MCF 10A (cell line): ENCODE measurements at regions of chr19 and their contacts with region 1.

Region 1: GRCh38 chr19:2032296-2032941 is 16.9 kb upstream of the BTBD2 start:
- DNase-seq: peak; percentile 98
- H3K4me3 Mint-ChIP-seq: peak overlapping the region; percentile 57
- H3K27ac Mint-ChIP-seq: peak overlapping the region; percentile 94
- H3K4me1 Mint-ChIP-seq: peaks cover 29% of the 10 kb centered on the region
- H3K27me3 Mint-ChIP-seq: no peaks in the 10 kb centered on the region
- CTCF ChIP-seq: no peak

Region 2: DNA sequence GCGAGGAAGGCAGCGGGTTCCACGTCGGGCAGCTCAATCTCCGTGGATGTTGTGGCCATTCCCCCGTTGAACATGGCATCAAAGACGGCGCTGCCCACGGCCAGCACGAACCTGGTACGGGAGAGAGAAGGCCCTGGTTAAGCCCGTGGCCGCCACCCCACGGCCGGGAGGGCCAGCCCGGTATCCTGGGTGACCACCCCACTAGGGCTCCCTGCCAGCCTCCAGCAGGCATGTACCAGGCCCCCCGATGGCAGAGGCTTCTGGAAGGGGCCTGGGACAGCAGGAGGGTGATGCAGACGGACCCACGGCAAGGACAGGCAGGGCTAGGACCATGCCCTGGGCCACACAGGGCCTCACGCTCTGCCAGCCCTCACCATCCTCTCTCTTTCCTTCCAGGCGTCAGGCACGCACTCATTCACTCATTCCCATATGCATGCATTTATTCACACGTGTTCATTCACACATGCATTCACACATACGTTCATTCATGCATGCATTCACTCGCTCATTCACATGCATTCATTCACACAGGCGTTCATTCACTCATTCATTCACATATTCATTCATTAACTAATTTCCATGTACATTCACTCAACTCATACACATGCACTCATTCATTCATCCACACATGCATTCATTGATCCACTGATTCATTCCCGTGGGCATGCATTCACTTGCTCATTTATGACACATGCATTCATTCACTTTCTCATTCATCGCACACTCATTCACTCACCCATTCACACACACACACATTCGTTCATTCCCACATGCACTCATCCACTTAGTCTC is 34.9 kb before region 1 on chr19:
- CTCF ChIA-PET with region 1: no interaction called
- POLR2A ChIA-PET with region 1: no interaction called
- intact Hi-C with region 1: no loop called
- DNase-seq: no peak
- H3K4me3 Mint-ChIP-seq: no peak overlapping the region
- H3K27ac Mint-ChIP-seq: no peak overlapping the region
- H3K4me1 Mint-ChIP-seq: peaks cover 6% of the 10 kb centered on the region
- H3K27me3 Mint-ChIP-seq: no peaks in the 10 kb centered on the region
- CTCF ChIP-seq: no peak

Region 3: DNA sequence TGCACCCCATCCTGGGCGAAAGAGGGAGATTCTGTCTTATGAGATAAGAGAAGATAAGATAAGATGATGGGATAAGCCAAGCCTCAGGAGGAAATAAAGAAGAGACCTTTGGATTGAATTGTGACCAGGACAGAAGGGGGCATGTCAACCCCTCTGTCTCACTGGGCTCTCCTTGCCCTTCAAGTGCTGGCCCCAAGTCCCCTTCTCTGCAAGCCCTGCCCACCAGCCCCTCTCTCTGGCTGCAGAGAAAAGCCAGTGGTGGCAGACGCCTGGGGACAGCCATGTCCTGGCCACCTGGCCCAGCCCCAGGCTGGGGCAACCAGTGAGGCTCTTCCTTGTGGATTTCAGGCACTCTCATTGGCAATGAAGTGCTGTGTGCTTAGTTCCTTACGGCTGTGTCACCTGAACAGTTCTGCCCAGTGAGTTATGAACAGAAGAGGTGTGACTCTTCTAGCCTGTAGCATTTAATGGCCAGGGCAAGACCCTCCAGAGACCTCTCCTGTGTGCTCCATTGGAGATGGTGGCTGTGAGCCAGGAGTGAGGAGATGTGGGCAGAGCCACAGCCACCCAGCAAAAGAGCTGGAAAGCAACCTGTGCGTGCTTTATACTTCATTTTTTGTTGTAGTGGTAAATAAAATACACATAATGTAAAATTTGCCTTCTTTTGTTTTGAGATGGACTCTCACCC is 10.8 kb before region 1 on chr19:
- CTCF ChIA-PET with region 1: interaction called, 8 read pairs
- POLR2A ChIA-PET with region 1: interaction called, 15 read pairs
- intact Hi-C with region 1: no loop called
- DNase-seq: no peak
- H3K4me3 Mint-ChIP-seq: no peak overlapping the region
- H3K27ac Mint-ChIP-seq: no peak overlapping the region
- H3K4me1 Mint-ChIP-seq: peaks cover 6% of the 10 kb centered on the region
- H3K27me3 Mint-ChIP-seq: no peaks in the 10 kb centered on the region
- CTCF ChIP-seq: no peak

Region 4: DNA sequence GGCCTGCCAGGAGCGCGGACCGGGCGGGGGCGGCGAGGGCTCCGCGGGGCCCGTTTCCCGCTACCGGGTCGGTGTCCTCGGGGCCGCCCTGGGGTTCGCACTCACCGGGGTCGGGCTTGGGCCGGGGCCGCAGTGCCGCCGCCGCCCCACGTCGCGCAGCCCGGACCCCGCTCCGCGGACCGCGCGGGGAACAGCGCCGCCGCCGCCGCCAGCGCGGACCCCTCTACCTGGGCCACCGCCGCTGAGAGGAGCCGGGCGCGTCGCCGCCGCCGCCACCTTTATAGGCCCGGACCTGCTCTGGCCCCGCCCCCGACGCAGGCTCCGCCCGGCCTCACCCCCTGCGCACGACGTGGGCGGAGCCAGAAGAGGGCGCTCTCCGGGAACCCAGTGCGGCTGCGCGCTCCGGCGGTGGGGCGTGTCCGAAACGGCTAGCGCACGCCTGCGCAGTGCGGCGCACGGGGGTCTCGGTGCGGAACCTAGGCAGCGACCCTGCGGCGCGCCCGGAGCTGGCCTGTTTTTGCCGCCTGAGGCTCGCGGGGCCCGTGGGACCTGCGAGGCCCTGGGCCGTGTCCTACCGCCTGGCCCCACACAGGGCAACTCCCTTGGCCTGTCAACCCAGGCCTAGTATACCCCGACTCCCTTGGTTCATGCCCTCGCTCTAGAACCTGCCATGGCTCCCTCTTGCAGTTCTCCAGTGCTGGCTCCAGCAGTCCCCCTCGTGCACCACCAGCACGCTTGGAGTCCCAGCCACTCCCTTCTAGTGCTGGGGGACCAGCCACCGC is 18.8 kb after region 1 on chr19 and contains the start of gene MKNK2:
- CTCF ChIA-PET with region 1: interaction called, 6 read pairs
- POLR2A ChIA-PET with region 1: interaction called, 27 read pairs
- intact Hi-C with region 1: no loop called
- DNase-seq: peak; percentile 90
- H3K4me3 Mint-ChIP-seq: peak within 1 kb of the TSS; percentile 92
- H3K27ac Mint-ChIP-seq: peak within 1 kb of the TSS; percentile 81
- H3K4me1 Mint-ChIP-seq: peaks cover 22% of the 10 kb centered on the region
- H3K27me3 Mint-ChIP-seq: no peaks in the 10 kb centered on the region
- CTCF ChIP-seq: peak; percentile 22
- total RNA-seq, gene MKNK2: 146 and 224 TPM in 2 replicates

Region 5: DNA sequence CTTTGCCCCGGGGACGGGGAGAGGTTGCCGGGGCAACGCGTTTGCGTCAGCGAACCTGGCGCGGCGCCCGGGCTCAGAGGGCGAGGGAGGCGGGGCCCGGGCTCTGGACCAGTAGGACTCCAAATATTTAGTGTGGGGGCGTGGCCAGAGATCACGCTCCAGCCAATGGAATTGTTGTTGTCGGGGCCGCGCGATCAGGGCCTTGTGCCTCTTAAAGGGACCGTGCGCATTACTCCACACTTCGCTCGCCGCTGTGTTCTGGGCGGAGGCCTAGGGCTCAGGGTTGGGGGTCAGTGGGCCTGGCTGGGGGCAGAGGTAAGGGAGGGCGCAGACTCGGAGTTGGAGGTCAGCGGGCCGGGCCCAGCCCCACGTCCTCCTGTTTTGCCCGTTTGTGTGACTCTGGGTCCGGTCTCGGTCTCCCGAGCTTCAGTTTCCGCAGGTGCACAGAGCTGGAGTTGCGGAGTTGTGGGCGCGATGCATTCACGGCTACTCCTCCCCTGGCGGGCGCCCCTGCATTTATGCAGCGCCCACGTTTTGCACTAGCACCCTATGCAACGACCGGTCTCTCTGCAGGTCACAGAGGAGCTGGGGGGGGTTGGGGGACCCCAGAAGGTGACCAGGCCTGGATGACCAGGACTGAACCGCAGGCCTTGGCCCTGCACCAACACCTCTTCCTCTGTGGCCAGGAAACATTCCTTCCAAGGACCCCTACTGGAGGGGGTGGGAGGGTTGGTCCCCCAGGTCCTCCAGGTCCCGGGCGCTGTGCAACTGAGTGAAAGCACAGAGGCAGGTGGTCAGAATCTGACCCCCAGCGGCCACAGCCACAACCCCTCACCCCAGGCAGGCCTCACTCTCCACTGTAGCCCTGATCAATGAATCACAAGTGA is 29.3 kb after region 1 on chr19:
- CTCF ChIA-PET with region 1: interaction called, 4 read pairs
- POLR2A ChIA-PET with region 1: interaction called, 49 read pairs
- intact Hi-C with region 1: loop called (anchors 1 kb)
- DNase-seq: peak; percentile 99
- H3K4me3 Mint-ChIP-seq: peak overlapping the region; percentile 73
- H3K27ac Mint-ChIP-seq: peak overlapping the region; percentile 19
- H3K4me1 Mint-ChIP-seq: peaks cover 16% of the 10 kb centered on the region
- H3K27me3 Mint-ChIP-seq: no peaks in the 10 kb centered on the region
- CTCF ChIP-seq: no peak

Region 6: GRCh38 chr19:2070436-2070827 is 38.0 kb after region 1 on chr19:
- CTCF ChIA-PET with region 1: interaction called, 12 read pairs
- POLR2A ChIA-PET with region 1: interaction called, 4 read pairs
- intact Hi-C with region 1: no loop called
- DNase-seq: no peak
- H3K4me3 Mint-ChIP-seq: no peak overlapping the region
- H3K27ac Mint-ChIP-seq: no peak overlapping the region
- H3K4me1 Mint-ChIP-seq: no peaks in the 10 kb centered on the region
- H3K27me3 Mint-ChIP-seq: no peaks in the 10 kb centered on the region
- CTCF ChIP-seq: no peak

Region 7: GRCh38 chr19:2087012-2087620 is 54.7 kb after region 1 on chr19:
- CTCF ChIA-PET with region 1: no interaction called
- POLR2A ChIA-PET with region 1: interaction called, 12 read pairs
- intact Hi-C with region 1: no loop called
- DNase-seq: peak; percentile 96
- H3K4me3 Mint-ChIP-seq: peak overlapping the region; percentile 22
- H3K27ac Mint-ChIP-seq: peak overlapping the region; percentile 63
- H3K4me1 Mint-ChIP-seq: peaks cover 42% of the 10 kb centered on the region
- H3K27me3 Mint-ChIP-seq: no peaks in the 10 kb centered on the region
- CTCF ChIP-seq: no peak